ENCODE measurements at regions of chrX and their contacts with region 1.

Region 1: DNA sequence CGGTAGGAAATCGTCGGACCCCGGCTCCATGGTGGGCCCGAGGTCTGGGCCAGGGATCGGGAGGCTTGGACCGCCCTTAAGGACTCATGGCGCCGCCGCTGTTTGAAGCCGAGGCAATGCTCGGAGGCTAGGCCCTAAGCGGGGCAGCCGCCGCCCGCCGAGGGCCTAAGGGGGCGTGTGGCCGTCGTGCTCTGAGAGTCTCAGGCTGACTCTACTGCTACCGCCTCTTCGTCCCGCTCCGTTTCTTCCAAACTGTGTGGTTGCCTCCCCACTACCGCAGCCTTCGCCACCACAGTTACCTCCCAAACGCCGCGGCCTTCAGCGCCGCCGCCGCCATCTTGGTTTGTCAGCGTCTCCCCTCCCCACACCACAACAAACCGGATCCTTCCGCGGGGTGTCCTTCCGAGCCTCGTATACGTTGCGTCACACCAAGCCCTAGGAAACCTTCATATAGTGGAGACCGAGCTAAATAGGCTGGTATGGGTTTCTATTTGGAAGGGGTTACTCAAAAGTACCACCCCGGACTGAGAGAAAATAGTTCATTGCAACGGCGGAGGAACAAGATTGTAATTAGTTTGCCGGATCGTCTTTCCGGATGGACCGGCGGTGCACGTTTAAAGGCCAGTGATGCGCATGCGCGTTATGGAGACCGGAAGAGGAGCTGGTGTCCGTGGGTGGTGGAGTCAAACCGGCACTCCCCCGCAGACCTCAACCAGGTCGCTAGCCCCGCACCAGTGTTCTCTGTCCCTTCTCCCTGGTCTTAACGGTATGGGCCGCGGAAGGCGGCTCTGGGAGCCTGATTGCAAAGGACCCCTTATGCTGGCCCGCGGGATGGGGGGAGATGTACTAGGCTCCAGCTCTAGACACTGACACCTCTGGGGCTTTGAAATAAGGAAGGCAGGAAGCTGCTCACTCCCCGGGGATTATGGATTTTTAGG is at the start of gene KDM5C:
- DNase-seq: peak; percentile 80
- H3K4me3 Mint-ChIP-seq: peak within 1 kb of the TSS; percentile 97
- H3K27ac Mint-ChIP-seq: peak within 1 kb of the TSS; percentile 98
- H3K4me1 Mint-ChIP-seq: peaks cover 50% of the 10 kb centered on the region
- H3K27me3 Mint-ChIP-seq: no peaks in the 10 kb centered on the region
- total RNA-seq, gene KDM5C: 115 and 120 TPM in 2 replicates

Region 2: GRCh38 chrX:53081925-53082772 is 143.0 kb before region 1 on chrX and contains the start of gene TSPYL2:
- intact Hi-C with region 1: loop called (anchors 1 kb)
- DNase-seq: peak; percentile 89
- H3K4me3 Mint-ChIP-seq: peak within 1 kb of the TSS; percentile 94
- H3K27ac Mint-ChIP-seq: peak within 1 kb of the TSS; percentile 99
- H3K4me1 Mint-ChIP-seq: peaks cover 29% of the 10 kb centered on the region
- H3K27me3 Mint-ChIP-seq: no peaks in the 10 kb centered on the region
- total RNA-seq, gene TSPYL2: 37.5 and 40.3 TPM in 2 replicates

Region 3: DNA sequence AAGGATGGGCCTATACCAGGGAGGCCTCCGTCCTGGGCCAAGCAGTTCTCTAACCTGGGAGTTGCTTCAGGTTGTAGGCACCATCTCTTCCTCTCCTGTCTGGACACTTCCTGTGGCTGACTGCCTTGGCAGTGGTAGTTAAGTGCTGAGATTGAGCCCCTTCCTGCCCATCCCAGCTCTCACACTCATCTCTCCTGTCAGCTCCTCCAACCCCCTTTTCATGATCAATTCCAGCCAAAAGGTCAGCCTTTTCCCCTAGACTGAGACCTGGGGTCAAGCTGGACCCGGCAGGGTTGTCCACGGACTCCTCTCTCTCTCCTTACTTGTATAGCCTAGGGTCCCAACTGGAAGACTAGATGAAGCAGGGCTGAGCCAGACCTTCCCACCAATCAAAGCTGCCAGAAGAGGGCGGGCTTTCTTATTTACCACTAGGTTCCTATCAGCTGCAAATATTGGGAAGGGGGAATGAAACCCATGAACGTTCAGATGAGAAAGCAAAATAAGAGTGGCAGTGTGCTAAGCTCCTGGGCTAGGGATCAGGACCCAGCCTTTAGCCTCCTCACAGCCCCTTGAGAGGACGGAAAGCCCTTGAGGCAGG is 34.7 kb before region 1 on chrX:
- intact Hi-C with region 1: no loop called
- DNase-seq: no peak
- H3K4me3 Mint-ChIP-seq: no peak overlapping the region
- H3K27ac Mint-ChIP-seq: peak overlapping the region; percentile 72
- H3K4me1 Mint-ChIP-seq: peaks cover 21% of the 10 kb centered on the region
- H3K27me3 Mint-ChIP-seq: no peaks in the 10 kb centered on the region

Region 4: GRCh38 chrX:53262918-53263394 is 37.8 kb after region 1 on chrX:
- intact Hi-C with region 1: loop called (anchors 2 kb)
- DNase-seq: no peak
- H3K4me3 Mint-ChIP-seq: no peak overlapping the region
- H3K27ac Mint-ChIP-seq: peak overlapping the region; percentile 23
- H3K4me1 Mint-ChIP-seq: peaks cover 28% of the 10 kb centered on the region
- H3K27me3 Mint-ChIP-seq: peaks cover 2% of the 10 kb centered on the region

Region 5: GRCh38 chrX:53441531-53442321 is 216.6 kb after region 1 on chrX:
- intact Hi-C with region 1: loop called (anchors 5 kb)
- DNase-seq: peak; percentile 74
- H3K4me3 Mint-ChIP-seq: peak overlapping the region; percentile 80
- H3K27ac Mint-ChIP-seq: peak overlapping the region; percentile 72
- H3K4me1 Mint-ChIP-seq: peaks cover 20% of the 10 kb centered on the region
- H3K27me3 Mint-ChIP-seq: peaks cover 2% of the 10 kb centered on the region

Region 6: GRCh38 chrX:53511322-53511721 is 286.2 kb after region 1 on chrX:
- intact Hi-C with region 1: no loop called
- DNase-seq: no peak
- H3K4me3 Mint-ChIP-seq: no peak overlapping the region
- H3K27ac Mint-ChIP-seq: no peak overlapping the region
- H3K4me1 Mint-ChIP-seq: no peaks in the 10 kb centered on the region
- H3K27me3 Mint-ChIP-seq: peaks cover 5% of the 10 kb centered on the region

Region 7: GRCh38 chrX:54529552-54530357 is 1304.6 kb after region 1 on chrX and contains the start of gene GNL3L:
- intact Hi-C with region 1: loop called (anchors 10 kb)
- DNase-seq: peak; percentile 69
- H3K4me3 Mint-ChIP-seq: peak within 1 kb of the TSS; percentile 95
- H3K27ac Mint-ChIP-seq: peak within 1 kb of the TSS; percentile 94
- H3K4me1 Mint-ChIP-seq: peaks cover 26% of the 10 kb centered on the region
- H3K27me3 Mint-ChIP-seq: no peaks in the 10 kb centered on the region
- total RNA-seq, gene GNL3L: 75.5 and 76.1 TPM in 2 replicates

Measured in activated T-helper 1 cell treated with anti-CD3 and anti-CD28 coated beads, Interleukin-12 subunit alpha, Interleukin-12 subunit beta, Interleukin-2, Interleukin-4 antibody, amounts not matched to agents 30 ng/mL and 10 ng/mL and 1 ng/mL, durations not matched to agents 14 hours and 24 hours and 36 hours (primary cell).